ENCODE measurements at regions of chr18 and their contacts with region 1.

Region 1: DNA sequence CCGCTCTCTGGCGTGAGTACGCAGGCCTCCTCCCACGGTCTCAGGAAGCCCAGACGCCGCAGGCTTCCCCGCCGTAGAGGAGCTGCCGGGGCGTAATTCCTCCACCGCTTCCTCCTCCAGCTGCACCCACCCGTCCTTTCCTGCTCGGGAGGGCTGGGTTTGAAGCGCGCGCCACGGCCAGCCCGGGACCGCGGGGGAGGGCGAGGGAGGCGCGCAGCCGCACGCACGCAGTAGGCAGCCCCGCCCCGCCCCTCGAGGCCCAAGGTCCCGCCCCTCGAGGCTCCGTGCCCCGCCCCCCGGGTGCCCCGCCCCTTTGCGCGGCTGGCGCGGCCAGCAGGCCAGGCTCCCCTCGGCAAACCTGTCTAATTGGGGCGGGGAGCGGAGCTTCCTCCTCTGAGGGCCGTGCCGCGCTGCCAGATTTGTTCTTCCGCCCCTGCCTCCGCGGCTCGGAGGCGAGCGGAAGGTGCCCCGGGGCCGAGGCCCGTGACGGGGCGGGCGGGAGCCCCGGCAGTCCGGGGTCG is at the start of gene MALT1:
- DNase-seq: peak; percentile 72 to 87
- H3K4me3 ChIP-seq: peak within 1 kb of the TSS; percentile 77
- H3K27ac ChIP-seq: peak within 1 kb of the TSS; percentile 85
- H3K4me1 ChIP-seq: peaks cover 61% of the 10 kb centered on the region
- H3K27me3 ChIP-seq: no peaks in the 10 kb centered on the region
- CTCF ChIP-seq: no peak
- total RNA-seq, gene MALT1: 19.0 and 19.6 TPM in 2 replicates

Region 2: DNA sequence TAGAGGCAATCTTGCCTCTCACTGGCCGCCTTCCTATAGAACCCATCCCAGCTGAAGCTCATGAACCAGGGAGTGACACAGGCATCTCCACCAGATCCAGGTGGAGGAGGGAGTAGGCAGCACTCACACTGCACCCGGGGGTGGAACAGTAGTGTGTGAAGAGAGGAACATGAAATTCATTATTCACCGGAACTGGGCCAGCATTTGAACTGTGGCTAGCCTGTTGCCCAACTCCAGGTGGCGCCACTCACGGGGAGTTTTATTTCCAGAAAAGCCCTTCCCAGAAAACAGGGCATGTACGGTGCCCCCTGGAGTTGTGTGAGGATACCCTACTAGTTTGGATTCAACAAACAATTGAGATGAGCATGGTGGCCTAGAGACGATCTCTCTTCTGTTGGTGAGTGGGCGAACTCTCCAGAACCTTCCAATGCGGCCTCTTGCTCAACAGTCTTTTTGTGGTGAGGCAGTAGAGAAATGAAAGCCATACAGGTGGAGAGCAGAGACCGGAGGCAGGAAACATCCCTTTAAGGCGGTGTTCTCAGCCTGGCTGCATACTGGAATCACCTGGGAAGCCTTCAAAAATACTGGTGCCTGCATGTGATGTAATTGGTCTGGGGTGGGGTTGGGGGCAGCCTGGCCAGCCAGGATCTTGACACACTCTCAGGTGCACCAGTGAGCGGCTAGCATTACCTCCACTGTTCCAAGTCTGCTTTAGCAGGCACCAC is 700.7 kb before region 1 on chr18:
- CTCF ChIA-PET with region 1: no interaction called
- POLR2A ChIA-PET with region 1: no interaction called
- intact Hi-C with region 1: no loop called
- DNase-seq: no peak
- H3K4me3 ChIP-seq: no peak overlapping the region
- H3K27ac ChIP-seq: no peak overlapping the region
- H3K4me1 ChIP-seq: no peaks in the 10 kb centered on the region
- H3K27me3 ChIP-seq: no peaks in the 10 kb centered on the region
- CTCF ChIP-seq: peak; percentile 51

Region 3: DNA sequence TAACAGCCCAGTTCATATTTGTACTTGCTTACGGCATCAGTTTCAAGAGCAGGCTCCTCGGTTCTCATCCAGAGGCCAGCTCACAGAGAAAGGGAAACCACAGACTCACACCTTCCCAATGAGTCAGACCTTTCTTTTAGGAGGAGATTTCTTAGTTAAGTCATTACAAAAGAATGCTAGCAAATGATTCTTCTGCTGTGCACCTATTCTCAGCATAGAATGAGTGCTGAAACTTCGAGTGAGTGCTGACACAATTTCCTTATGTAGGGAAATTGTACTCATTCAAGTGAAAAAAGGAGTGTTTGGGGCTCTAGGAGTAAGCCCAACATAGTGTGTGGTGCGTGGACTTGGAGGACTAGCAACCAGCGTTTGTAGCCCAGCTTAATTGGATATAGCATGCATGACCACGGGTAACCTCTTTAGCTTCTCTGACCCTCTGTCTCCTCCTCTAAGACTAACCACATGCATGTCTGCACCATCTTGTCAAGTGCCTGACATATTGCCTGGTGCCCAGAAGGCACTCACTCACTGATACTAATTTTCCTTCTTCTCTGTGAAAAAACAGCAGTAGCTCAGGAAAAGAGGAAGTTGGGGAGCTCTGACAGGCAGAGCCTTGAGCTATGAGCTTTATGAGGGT is 129.3 kb before region 1 on chr18:
- CTCF ChIA-PET with region 1: interaction called, 3 read pairs
- POLR2A ChIA-PET with region 1: interaction called, 7 read pairs
- intact Hi-C with region 1: loop called (anchors 1 kb)
- DNase-seq: peak; percentile 50 to 99
- H3K4me3 ChIP-seq: no peak overlapping the region
- H3K27ac ChIP-seq: peak overlapping the region; percentile 88
- H3K4me1 ChIP-seq: peaks cover 39% of the 10 kb centered on the region
- H3K27me3 ChIP-seq: no peaks in the 10 kb centered on the region
- CTCF ChIP-seq: no peak

Region 4: GRCh38 chr18:58691256-58691655 is 20.1 kb after region 1 on chr18:
- CTCF ChIA-PET with region 1: interaction called, 4 read pairs
- POLR2A ChIA-PET with region 1: interaction called, 29 read pairs
- intact Hi-C with region 1: no loop called
- DNase-seq: peak; percentile 71 to 96
- H3K4me3 ChIP-seq: peak overlapping the region; percentile 35; the same call in 1 of the 2 replicates
- H3K27ac ChIP-seq: peak overlapping the region; percentile 62
- H3K4me1 ChIP-seq: peaks cover 13% of the 10 kb centered on the region
- H3K27me3 ChIP-seq: no peaks in the 10 kb centered on the region
- CTCF ChIP-seq: no peak

Region 5: GRCh38 chr18:58761241-58761969 is 90.2 kb after region 1 on chr18:
- CTCF ChIA-PET with region 1: interaction called, 4 read pairs
- POLR2A ChIA-PET with region 1: interaction called, 31 read pairs
- intact Hi-C with region 1: no loop called
- DNase-seq: no peak
- H3K4me3 ChIP-seq: no peak overlapping the region
- H3K27ac ChIP-seq: no peak overlapping the region
- H3K4me1 ChIP-seq: no peaks in the 10 kb centered on the region
- H3K27me3 ChIP-seq: 0 out of 2 replicates have a peak, but pooled peaks cover 3% of the 10 kb centered on the region
- CTCF ChIP-seq: no peak